Posterior vena cava (tissue), 2 donors: ENCODE measurements at regions of chr12 and their contacts with region 1.

Region 1: GRCh38 chr12:133206390-133206789 is 25.1 kb downstream of the ZNF268 start:
- DNase-seq: no peak

Region 2: DNA sequence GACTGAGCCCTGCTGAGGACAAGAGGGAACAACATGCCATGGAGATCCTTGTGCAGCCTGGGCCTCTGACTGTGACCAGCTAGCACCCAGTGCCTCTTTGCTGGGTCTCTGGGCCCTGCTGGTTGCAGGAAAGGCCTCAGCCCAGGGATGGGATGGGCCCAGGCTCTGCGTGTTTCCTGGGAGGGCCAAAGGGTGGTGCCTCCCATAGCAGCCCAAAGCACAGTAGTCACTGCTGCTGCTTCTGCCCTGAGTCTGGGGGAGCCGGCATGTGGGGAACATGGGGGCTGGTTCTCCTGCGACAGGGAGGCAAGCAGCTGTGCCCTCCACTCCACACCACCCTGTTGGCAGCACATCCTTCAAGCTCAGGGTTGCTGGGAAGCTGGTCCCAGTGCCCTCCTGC is 10.8 kb after region 1 on chr12:
- intact Hi-C with region 1: no loop called
- DNase-seq: no peak

Region 3: GRCh38 chr12:133227281-133227852 is 21.0 kb after region 1 on chr12:
- intact Hi-C with region 1: loop called in 1 of 2 experiments (anchors 1 kb)
- DNase-seq: no peak